ENCODE measurements at regions of chr1 and their contacts with region 1.

Region 1: GRCh38 chr1:64136752-64137411 is 66.5 kb upstream of the UBE2U start:
- DNase-seq: peak; percentile 65
- H3K4me3 ChIP-seq: no peak overlapping the region
- H3K27ac ChIP-seq: no peak overlapping the region
- H3K27me3 ChIP-seq: no peaks in the 10 kb centered on the region
- CTCF ChIP-seq: peak; percentile 97

Region 2: DNA sequence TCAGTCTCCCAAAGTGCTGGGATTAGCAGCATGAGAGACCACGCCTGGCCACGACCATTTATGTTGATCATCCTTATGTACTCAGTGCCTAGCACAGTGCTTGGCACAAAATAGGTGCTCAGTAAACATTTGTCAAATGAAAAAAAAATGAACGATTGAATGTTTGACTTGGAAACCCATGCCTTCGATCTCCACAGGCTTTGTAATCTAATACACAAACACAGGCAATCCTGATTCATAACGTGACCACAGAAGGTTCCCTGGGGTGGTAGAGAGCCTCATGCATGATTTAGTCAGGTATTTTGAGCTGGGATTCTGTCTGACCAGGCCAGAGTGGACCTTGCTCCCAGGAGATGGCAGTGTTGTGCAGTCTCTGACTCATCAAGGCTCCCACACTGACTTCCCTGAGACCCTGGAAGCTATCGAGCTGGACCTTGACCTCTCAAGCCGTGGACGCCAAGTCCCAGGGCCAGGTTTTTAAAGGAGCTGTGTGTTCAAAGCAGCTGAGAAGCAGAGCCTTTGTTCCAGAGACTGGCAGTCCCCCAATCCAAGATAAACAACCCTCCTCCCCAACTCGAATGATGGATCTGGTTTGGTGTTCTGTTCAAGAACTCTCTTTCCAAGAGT is 462.5 kb before region 1 on chr1:
- CTCF ChIA-PET with region 1: interaction called, 71 read pairs
- POLR2A ChIA-PET with region 1: no interaction called
- DNase-seq: peak; percentile 74
- H3K4me3 ChIP-seq: no peak overlapping the region
- H3K27ac ChIP-seq: no peak overlapping the region
- H3K27me3 ChIP-seq: no peaks in the 10 kb centered on the region
- CTCF ChIP-seq: peak; percentile 85

Region 3: GRCh38 chr1:63779338-63780211 is 357.3 kb before region 1 on chr1:
- CTCF ChIA-PET with region 1: interaction called, 10 read pairs
- POLR2A ChIA-PET with region 1: no interaction called
- DNase-seq: peak; percentile 29
- H3K4me3 ChIP-seq: no peak overlapping the region
- H3K27ac ChIP-seq: no peak overlapping the region
- H3K27me3 ChIP-seq: peaks cover 12% of the 10 kb centered on the region
- CTCF ChIP-seq: no peak

Region 4: DNA sequence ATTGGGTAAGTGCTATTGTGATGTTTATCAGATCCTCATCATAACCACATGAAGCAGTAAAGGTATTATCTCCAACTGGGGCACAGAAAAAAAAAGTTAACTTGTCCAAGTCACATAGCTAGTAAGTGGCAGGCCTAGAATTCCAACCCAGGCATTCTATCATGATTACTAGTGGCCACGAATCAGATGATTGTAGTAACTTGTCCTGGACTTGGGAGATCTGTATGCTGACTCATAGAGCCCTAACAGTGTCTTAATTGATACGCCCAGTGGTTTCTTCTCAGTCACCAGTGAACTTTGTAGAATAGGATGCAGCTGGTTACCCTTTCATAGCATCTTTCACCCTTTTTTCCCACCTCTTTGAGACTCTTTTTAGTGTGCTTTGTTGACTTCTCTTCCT is 24.6 kb before region 1 on chr1:
- CTCF ChIA-PET with region 1: interaction called, 13 read pairs
- POLR2A ChIA-PET with region 1: interaction called, 5 read pairs
- DNase-seq: no peak
- H3K4me3 ChIP-seq: no peak overlapping the region
- H3K27ac ChIP-seq: no peak overlapping the region
- H3K27me3 ChIP-seq: no peaks in the 10 kb centered on the region
- CTCF ChIP-seq: no peak

Region 5: DNA sequence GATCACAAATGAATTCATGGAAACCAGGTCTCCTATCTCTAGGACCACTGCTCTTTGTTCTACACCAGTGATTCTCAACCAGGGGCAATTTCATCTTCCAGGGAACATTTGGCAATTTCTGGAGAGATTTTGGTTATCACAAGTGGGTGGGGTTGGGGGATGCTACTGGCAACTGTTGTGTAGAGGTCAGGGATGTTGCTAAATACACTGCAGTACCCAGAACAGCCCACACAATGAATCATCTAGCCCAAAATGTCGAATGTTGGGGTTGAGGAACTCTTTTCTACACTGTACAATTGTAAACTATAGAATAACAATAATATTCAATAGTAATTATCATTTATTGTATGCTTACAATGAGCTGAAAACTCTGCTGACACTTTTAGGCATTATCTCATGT is 10.9 kb after region 1 on chr1:
- CTCF ChIA-PET with region 1: interaction called, 20 read pairs
- POLR2A ChIA-PET with region 1: no interaction called
- DNase-seq: no peak
- H3K4me3 ChIP-seq: no peak overlapping the region
- H3K27ac ChIP-seq: no peak overlapping the region
- H3K27me3 ChIP-seq: peaks cover 2% of the 10 kb centered on the region
- CTCF ChIP-seq: no peak

Region 6: DNA sequence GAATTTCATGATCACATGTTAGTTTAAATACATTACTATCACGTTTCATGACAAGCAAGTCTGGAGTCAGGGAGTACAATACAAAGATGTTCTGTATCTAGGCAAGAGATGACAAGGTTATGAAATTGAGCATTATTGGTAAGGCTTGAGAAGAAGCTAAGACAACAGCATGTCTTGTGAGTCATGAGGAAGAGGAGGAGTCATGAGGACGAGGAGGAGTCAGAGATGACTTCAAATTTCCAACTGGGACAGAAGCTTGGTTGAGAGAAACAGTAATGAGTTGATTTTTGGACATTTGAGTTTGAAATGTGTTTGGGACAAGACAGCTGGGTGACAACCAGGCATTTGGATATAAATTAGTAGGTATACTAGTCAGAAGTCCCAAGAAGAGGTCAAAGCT is 62.3 kb after region 1 on chr1:
- CTCF ChIA-PET with region 1: no interaction called
- POLR2A ChIA-PET with region 1: no interaction called
- DNase-seq: no peak
- H3K4me3 ChIP-seq: no peak overlapping the region
- H3K27ac ChIP-seq: no peak overlapping the region
- H3K27me3 ChIP-seq: no peaks in the 10 kb centered on the region
- CTCF ChIP-seq: no peak

Region 7: GRCh38 chr1:64242895-64243756 is 106.2 kb after region 1 on chr1:
- CTCF ChIA-PET with region 1: interaction called, 26 read pairs
- POLR2A ChIA-PET with region 1: no interaction called
- DNase-seq: no peak
- H3K4me3 ChIP-seq: no peak overlapping the region
- H3K27ac ChIP-seq: no peak overlapping the region
- H3K27me3 ChIP-seq: no peaks in the 10 kb centered on the region
- CTCF ChIP-seq: peak; percentile 49

Measured in AG04450 (cell line).